ENCODE measurements at regions of chr12 and their contacts with region 1.

Region 1: GRCh38 chr12:1117970-1118563 is 127.0 kb downstream of the ERC1 start:
- DNase-seq: peak; percentile 81
- H3K4me3 ChIP-seq: no peak overlapping the region
- H3K27ac ChIP-seq: no peak overlapping the region
- H3K4me1 ChIP-seq: peaks cover 13% of the 10 kb centered on the region
- H3K27me3 ChIP-seq: no peaks in the 10 kb centered on the region
- CTCF ChIP-seq: peak; percentile 66 to 79
- POLR2A ChIP-seq: no peak

Region 2: DNA sequence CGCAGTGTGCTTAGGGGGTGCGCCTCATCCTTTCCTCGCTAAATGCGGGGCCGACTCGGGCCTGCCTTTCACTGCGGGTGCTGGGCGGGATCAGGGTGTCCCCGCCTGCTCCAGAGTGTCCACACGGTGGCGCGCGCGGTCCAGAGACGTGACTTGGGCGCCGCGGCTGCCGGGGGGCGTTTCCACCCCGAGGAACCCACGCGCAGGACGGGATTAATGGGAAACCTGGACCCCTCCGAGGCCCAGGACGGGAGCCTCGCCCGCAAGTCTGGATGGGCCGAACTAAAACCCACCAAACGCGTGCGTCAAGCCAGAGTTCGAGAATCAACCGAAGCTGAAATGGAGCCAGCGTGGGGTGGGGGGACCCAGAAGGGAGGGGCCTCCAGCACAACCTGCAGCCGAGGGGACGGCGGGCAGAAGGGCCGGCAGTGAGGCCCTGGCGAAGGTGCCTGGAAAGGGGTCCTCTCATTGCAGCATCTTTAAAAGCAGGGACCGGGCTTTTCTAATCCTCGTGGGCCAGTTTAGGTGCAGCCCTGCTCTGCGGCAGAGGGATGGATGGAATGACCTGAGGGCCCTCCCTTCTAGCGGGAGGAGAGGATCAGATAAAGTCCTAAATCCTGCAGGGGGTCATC is 548.1 kb before region 1 on chr12:
- CTCF ChIA-PET with region 1: interaction called, 12 read pairs
- POLR2A ChIA-PET with region 1: no interaction called
- dilution Hi-C with region 1: no loop called
- intact Hi-C with region 1: no loop called
- DNase-seq: peak; percentile 58
- H3K4me3 ChIP-seq: peak overlapping the region; percentile 36 to 81 (median 67)
- H3K27ac ChIP-seq: peak overlapping the region; percentile 77
- H3K4me1 ChIP-seq: peaks cover 23% of the 10 kb centered on the region
- H3K27me3 ChIP-seq: peaks cover 2 to 3% of the 10 kb centered on the region in 2 experiments
- CTCF ChIP-seq: peak; percentile 79 to 97
- POLR2A ChIP-seq: no peak

Region 3: DNA sequence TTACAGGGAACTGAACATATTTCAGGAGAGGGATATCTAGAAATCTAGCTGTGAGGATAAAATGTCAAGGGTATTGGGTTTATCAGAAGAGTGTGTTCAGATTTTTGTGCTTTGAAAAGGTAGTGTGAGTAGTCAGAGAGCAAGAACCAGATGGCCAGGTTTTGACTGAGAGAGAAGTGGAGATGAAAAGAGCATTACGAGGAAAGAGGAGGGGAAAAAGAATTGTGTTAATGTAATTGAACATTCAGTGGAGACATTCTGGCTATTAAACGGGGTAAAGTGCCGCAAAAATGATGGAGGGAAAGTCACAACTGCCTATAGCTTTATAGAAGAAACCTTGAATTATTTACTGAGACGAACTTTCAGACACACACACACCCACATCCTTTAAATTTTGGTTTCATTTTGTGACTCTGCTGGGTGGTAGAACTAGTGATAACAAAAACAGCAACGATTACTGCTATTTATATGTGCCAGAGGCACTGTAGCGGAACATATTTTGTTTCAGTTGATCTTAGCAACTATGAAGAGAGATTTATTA is 86.6 kb after region 1 on chr12:
- CTCF ChIA-PET with region 1: interaction called, 16 read pairs
- POLR2A ChIA-PET with region 1: no interaction called
- dilution Hi-C with region 1: no loop called
- intact Hi-C with region 1: no loop called
- DNase-seq: peak; percentile 74
- H3K4me3 ChIP-seq: peak overlapping the region; percentile 36 to 88 (median 77)
- H3K27ac ChIP-seq: peak overlapping the region; percentile 75
- H3K4me1 ChIP-seq: peaks cover 36% of the 10 kb centered on the region
- H3K27me3 ChIP-seq: no peaks in the 10 kb centered on the region
- CTCF ChIP-seq: no peak
- POLR2A ChIP-seq: no peak

Region 4: DNA sequence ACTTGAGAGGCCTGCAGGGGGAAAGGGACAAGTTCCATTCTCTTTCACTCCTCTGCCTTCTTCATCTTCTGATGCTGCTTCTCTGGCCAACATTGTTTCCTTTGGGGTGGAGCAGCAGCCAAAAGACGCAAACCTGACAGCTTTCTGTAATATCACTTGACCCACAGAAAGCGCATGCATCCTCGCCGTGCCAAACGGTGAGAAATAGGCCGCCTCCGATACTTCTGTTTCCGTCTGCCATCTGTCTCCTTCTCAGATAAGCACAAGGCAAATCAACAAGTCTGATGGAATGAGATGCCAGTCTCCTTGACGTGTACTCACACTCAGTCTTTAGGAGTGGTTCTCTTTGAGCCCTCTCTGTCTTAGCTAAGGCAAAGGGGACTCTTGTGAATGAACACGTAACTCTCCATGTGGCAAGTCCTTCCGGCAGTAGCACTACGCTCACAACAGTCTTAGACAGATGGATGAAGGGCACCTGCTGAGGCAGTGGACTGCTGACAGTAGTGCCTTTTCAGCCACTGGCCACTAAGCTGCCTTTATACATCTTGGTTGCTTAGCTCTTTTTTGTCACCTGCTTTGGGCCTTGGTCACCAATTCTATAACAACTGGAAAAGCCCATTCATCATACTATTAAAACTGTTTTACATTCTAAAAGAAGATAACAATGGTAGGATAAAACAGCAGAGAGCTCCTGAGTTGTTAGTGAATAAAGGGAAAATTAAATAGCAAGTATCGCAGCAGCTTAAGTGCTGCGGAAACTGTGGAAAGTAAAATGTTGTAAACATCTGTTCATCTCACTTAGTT is 262.3 kb after region 1 on chr12:
- CTCF ChIA-PET with region 1: interaction called, 15 read pairs
- POLR2A ChIA-PET with region 1: no interaction called
- dilution Hi-C with region 1: no loop called
- intact Hi-C with region 1: no loop called
- DNase-seq: no peak
- H3K4me3 ChIP-seq: no peak overlapping the region
- H3K27ac ChIP-seq: no peak overlapping the region
- H3K4me1 ChIP-seq: no peaks in the 10 kb centered on the region
- H3K27me3 ChIP-seq: no peaks in the 10 kb centered on the region
- CTCF ChIP-seq: no peak
- POLR2A ChIP-seq: no peak

Region 5: GRCh38 chr12:1527789-1528188 is 409.7 kb after region 1 on chr12:
- CTCF ChIA-PET with region 1: interaction called, 22 read pairs
- POLR2A ChIA-PET with region 1: no interaction called
- dilution Hi-C with region 1: no loop called
- intact Hi-C with region 1: no loop called
- DNase-seq: no peak
- H3K4me3 ChIP-seq: no peak overlapping the region
- H3K27ac ChIP-seq: no peak overlapping the region
- H3K4me1 ChIP-seq: no peaks in the 10 kb centered on the region
- H3K27me3 ChIP-seq: peaks cover 49 to 54% of the 10 kb centered on the region in 2 experiments
- CTCF ChIP-seq: no peak
- POLR2A ChIP-seq: no peak

Region 6: GRCh38 chr12:1566449-1567135 is 448.5 kb after region 1 on chr12:
- CTCF ChIA-PET with region 1: interaction called, 27 read pairs
- POLR2A ChIA-PET with region 1: no interaction called
- dilution Hi-C with region 1: loop called (anchors 25 kb)
- intact Hi-C with region 1: no loop called
- DNase-seq: no peak
- H3K4me3 ChIP-seq: no peak overlapping the region
- H3K27ac ChIP-seq: no peak overlapping the region
- H3K4me1 ChIP-seq: no peaks in the 10 kb centered on the region
- H3K27me3 ChIP-seq: peaks cover 26 to 32% of the 10 kb centered on the region in 2 experiments
- CTCF ChIP-seq: no peak
- POLR2A ChIP-seq: no peak

Region 7: DNA sequence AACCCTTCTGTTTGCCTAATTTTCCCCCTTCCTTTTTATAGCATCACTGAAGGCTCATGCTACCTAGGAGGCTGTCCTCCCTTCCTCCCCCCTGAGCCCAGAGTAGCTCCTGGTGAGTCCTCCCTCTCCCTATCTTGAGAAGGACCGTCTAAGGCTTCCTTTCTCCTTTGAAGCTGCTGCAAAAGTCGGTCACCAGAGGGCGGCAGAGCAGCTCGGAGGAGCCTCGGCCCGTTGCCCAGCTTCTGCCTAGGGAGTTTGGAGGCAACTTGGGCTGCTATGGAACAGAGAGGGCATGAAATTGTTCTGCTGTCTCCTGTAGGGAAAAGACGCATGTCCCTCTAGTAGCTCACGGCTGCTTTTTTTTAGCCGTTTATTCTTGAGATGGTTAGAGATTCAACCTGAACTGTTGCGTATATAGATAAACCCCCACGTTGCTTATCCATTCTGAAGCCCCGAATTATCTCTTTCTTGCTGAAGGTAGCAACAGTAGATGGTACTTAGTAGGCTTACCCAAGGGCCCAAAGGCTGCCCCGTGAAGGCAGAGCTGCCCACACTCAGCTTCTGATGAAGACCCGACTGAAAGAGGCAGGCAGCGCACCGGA is 516.6 kb after region 1 on chr12:
- CTCF ChIA-PET with region 1: interaction called, 14 read pairs
- POLR2A ChIA-PET with region 1: no interaction called
- dilution Hi-C with region 1: no loop called
- intact Hi-C with region 1: no loop called
- DNase-seq: peak; percentile 65
- H3K4me3 ChIP-seq: no peak overlapping the region
- H3K27ac ChIP-seq: no peak overlapping the region
- H3K4me1 ChIP-seq: peaks cover 5% of the 10 kb centered on the region
- H3K27me3 ChIP-seq: peaks cover 36 to 42% of the 10 kb centered on the region in 2 experiments
- CTCF ChIP-seq: peak; percentile 85 to 87
- POLR2A ChIP-seq: no peak